ENCODE measurements at regions of chr3 and their contacts with region 1.

Region 1: DNA sequence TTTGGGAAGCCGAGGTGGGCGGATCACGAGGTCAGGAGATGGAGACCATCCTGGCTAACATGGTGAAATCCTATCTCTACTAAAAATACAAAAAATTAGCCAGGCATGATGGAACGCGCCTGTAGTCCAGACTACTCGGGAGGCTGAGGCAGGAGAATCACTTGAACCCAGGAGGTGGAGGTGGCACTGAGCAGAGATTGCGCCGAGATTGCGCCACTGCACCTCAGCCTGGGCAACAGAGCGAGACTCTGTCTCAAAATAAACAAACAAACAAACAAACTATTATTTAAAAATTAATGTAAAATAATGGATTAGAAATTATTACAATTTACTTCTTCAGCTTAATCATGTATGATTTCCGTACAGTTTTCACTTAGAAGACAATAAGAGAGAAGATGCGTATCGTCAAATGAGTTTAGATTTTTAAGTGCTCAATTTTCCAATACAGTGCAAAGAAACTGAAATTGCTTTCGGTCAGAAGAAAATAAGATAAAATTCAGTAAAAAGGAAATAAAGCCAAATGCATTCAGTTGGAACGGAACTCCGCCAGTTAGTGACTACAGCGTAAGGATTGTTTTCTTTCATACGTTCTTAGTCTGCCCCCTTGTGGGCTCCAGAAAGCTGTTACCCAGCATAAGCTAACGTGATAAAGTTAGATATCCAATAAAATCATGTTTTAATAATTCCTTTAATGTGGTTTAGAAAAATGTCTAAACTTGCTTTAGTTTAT is 24.8 kb downstream of the AADAC start:
- DNase-seq: no peak
- H3K4me3 ChIP-seq: no peak overlapping the region
- CTCF ChIP-seq: peak; percentile 61

Region 2: GRCh38 chr3:151168269-151169094 is 670.3 kb before region 1 on chr3:
- CTCF ChIA-PET with region 1: interaction called, 10 read pairs
- POLR2A ChIA-PET with region 1: no interaction called
- DNase-seq: no peak
- H3K4me3 ChIP-seq: no peak overlapping the region
- CTCF ChIP-seq: peak; percentile 86

Region 3: GRCh38 chr3:151290673-151291072 is 548.1 kb before region 1 on chr3:
- CTCF ChIA-PET with region 1: interaction called, 50 read pairs
- POLR2A ChIA-PET with region 1: no interaction called
- DNase-seq: no peak
- H3K4me3 ChIP-seq: no peak overlapping the region
- CTCF ChIP-seq: peak; percentile 28

Region 4: DNA sequence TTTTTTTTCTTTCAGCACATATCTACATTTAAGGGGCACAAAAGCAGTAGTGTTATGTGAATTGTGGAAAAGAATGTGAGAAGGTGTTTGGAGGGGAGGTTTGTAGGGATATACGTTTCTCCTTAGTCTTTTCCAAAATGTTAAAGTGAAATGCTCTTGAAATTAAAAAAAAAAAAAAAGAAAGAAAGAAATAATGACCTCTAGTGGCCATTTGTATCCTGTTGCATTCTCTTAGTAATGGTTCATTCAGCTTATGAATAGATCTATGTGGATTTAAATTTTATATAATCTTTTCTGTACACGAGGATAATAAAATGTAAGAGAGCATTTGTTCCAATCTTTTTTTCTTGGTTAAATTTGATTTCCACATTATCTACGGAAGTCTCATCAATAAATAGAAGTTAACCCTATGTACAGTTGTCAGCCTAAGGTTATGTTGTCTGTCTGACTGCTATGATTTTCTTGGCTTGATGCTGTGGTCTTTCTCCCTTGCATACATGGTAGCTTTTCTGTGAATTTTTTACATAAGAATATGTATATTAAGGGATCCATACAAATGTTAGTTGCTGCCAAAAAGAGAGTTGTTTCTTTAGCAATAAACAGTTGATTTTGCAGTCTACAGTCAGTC is 511.1 kb before region 1 on chr3:
- CTCF ChIA-PET with region 1: interaction called, 11 read pairs
- POLR2A ChIA-PET with region 1: no interaction called
- DNase-seq: no peak
- H3K4me3 ChIP-seq: no peak overlapping the region
- CTCF ChIP-seq: peak; percentile 28

Region 5: DNA sequence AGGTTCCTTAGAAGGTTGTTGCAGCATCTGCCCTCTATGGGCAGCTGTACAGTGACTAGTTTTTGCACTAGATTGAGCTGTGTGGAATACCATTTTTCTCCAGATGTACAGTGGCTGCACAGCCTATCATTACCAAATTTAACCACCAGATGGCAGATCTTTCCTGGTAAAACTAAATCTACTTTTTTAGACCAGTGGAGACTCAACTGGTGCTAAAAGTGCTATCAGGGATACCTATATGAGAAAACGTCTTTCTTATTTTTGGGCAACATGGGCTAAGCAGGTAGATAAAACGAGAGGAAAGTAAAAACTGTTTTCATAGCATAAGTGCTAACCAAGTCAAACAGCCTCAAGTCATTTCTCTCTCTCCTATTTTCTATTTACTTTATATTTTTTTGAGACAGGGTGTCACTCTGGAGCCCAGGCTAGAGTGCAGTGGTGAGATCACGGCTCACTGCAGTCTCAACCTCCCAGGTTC is 399.1 kb before region 1 on chr3:
- CTCF ChIA-PET with region 1: interaction called, 121 read pairs
- POLR2A ChIA-PET with region 1: no interaction called
- DNase-seq: no peak
- H3K4me3 ChIP-seq: no peak overlapping the region
- CTCF ChIP-seq: peak; percentile 52

Region 6: GRCh38 chr3:151468284-151468917 is 370.3 kb before region 1 on chr3:
- CTCF ChIA-PET with region 1: interaction called, 47 read pairs
- POLR2A ChIA-PET with region 1: no interaction called
- DNase-seq: no peak
- H3K4me3 ChIP-seq: no peak overlapping the region
- CTCF ChIP-seq: peak; percentile 77

Region 7: GRCh38 chr3:151675858-151676615 is 162.7 kb before region 1 on chr3:
- CTCF ChIA-PET with region 1: no interaction called
- POLR2A ChIA-PET with region 1: no interaction called
- DNase-seq: no peak
- H3K4me3 ChIP-seq: no peak overlapping the region
- CTCF ChIP-seq: no peak

Region 8: GRCh38 chr3:151743855-151744254 is 94.9 kb before region 1 on chr3:
- CTCF ChIA-PET with region 1: no interaction called
- POLR2A ChIA-PET with region 1: no interaction called
- DNase-seq: no peak
- H3K4me3 ChIP-seq: no peak overlapping the region
- CTCF ChIP-seq: no peak

Region 9: GRCh38 chr3:151918253-151919029 is 79.7 kb after region 1 on chr3:
- CTCF ChIA-PET with region 1: interaction called, 18 read pairs
- POLR2A ChIA-PET with region 1: no interaction called
- DNase-seq: no peak
- H3K4me3 ChIP-seq: no peak overlapping the region
- CTCF ChIP-seq: peak; percentile 47

Region 10: GRCh38 chr3:152843955-152844354 is 1005.2 kb after region 1 on chr3:
- CTCF ChIA-PET with region 1: no interaction called
- POLR2A ChIA-PET with region 1: no interaction called
- DNase-seq: no peak
- H3K4me3 ChIP-seq: no peak overlapping the region
- CTCF ChIP-seq: no peak